Calu3 (cell line): ENCODE measurements at regions of chr10 and their contacts with region 1.

Region 1: GRCh38 chr10:88687853-88688467 is 18.1 kb upstream of the LIPK start:
- DNase-seq: no peak
- H3K4me3 Mint-ChIP-seq: no peak overlapping the region
- H3K27ac Mint-ChIP-seq: no peak overlapping the region
- H3K4me1 Mint-ChIP-seq: peaks cover 8% of the 10 kb centered on the region
- H3K27me3 Mint-ChIP-seq: no peaks in the 10 kb centered on the region
- CTCF ChIP-seq: no peak

Region 2: DNA sequence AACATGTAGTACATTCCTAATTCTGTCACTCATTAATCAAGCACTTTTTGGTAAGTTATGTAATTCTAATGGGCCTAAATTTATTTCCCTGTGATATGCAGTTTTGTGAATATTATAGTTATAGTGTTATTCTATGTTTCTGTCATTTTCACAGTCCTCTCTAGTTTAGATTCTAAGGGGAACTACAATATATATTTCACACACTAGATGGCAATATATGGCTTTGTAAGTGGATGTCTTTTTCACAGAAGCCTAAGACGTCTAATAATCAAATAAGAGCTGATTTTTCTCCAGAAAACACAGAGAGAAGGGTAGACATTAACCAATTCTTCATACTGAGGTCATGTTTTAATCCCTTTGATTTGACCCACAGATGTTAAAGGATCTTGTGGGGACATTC is 122.9 kb before region 1 on chr10:
- CTCF ChIA-PET with region 1: no interaction called
- intact Hi-C with region 1: loop called (anchors 5 kb)
- DNase-seq: no peak
- H3K4me3 Mint-ChIP-seq: no peak overlapping the region
- H3K27ac Mint-ChIP-seq: no peak overlapping the region
- H3K4me1 Mint-ChIP-seq: no peaks in the 10 kb centered on the region
- H3K27me3 Mint-ChIP-seq: no peaks in the 10 kb centered on the region
- CTCF ChIP-seq: no peak

Region 3: GRCh38 chr10:88744002-88744401 is 56.0 kb after region 1 on chr10:
- CTCF ChIA-PET with region 1: interaction called, 3 read pairs
- intact Hi-C with region 1: loop called (anchors 1 kb)
- DNase-seq: peak; percentile 35
- H3K4me3 Mint-ChIP-seq: no peak overlapping the region
- H3K27ac Mint-ChIP-seq: no peak overlapping the region
- H3K4me1 Mint-ChIP-seq: no peaks in the 10 kb centered on the region
- H3K27me3 Mint-ChIP-seq: peaks cover 19% of the 10 kb centered on the region
- CTCF ChIP-seq: no peak

Region 4: DNA sequence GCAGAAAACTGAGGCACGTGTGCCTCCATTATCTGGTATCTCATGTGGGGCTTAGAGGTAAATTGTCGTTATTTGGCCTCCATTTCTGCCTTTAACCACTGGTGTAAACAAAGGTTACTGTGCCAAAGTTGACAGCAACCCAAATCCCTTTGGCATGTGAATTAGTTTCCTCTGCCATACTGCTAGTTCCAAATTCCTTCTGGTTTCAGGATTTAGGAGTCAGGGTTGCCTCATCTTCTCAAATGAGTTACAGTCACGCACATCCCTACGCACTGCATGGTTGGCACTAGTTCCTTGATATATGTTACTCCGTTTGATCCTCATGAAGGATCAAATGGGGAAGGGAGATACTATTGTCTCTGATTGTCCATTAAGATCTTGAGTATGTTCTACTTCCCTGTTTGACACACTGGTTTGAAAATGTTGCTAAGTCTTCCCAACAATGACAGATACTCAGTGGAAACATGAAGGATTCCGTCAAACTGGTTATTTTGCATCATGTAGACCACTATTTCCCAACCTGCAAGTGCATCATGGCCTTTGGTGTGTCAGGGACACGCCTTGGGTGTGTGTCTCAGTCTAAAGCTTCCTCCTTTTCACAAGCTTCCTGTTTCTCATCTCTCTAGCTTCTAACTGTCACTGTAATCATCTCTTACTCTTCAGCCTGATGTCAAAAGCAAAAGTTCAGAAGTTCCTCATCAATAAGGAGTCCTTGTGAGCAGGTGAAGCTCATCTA is 71.6 kb after region 1 on chr10 and contains the start of gene LIPN:
- CTCF ChIA-PET with region 1: no interaction called
- intact Hi-C with region 1: no loop called
- DNase-seq: no peak
- H3K4me3 Mint-ChIP-seq: no peak within 1 kb of the TSS
- H3K27ac Mint-ChIP-seq: no peak within 1 kb of the TSS
- H3K4me1 Mint-ChIP-seq: no peaks in the 10 kb centered on the region
- H3K27me3 Mint-ChIP-seq: no peaks in the 10 kb centered on the region
- CTCF ChIP-seq: no peak
- total RNA-seq, gene LIPN: not detected in 2 replicates

Region 5: GRCh38 chr10:88791924-88792323 is 104.0 kb after region 1 on chr10:
- CTCF ChIA-PET with region 1: interaction called, 4 read pairs
- intact Hi-C with region 1: loop called (anchors 5 kb)
- DNase-seq: peak; percentile 21
- H3K4me3 Mint-ChIP-seq: no peak overlapping the region
- H3K27ac Mint-ChIP-seq: no peak overlapping the region
- H3K4me1 Mint-ChIP-seq: peaks cover 18% of the 10 kb centered on the region
- H3K27me3 Mint-ChIP-seq: peaks cover 9% of the 10 kb centered on the region
- CTCF ChIP-seq: no peak

Region 6: GRCh38 chr10:88810196-88810961 is 122.4 kb after region 1 on chr10:
- CTCF ChIA-PET with region 1: interaction called, 3 read pairs
- intact Hi-C with region 1: loop called (anchors 1 kb)
- DNase-seq: peak; percentile 34
- H3K4me3 Mint-ChIP-seq: no peak overlapping the region
- H3K27ac Mint-ChIP-seq: no peak overlapping the region
- H3K4me1 Mint-ChIP-seq: peaks cover 10% of the 10 kb centered on the region
- H3K27me3 Mint-ChIP-seq: no peaks in the 10 kb centered on the region
- CTCF ChIP-seq: peak; percentile 39

Region 7: DNA sequence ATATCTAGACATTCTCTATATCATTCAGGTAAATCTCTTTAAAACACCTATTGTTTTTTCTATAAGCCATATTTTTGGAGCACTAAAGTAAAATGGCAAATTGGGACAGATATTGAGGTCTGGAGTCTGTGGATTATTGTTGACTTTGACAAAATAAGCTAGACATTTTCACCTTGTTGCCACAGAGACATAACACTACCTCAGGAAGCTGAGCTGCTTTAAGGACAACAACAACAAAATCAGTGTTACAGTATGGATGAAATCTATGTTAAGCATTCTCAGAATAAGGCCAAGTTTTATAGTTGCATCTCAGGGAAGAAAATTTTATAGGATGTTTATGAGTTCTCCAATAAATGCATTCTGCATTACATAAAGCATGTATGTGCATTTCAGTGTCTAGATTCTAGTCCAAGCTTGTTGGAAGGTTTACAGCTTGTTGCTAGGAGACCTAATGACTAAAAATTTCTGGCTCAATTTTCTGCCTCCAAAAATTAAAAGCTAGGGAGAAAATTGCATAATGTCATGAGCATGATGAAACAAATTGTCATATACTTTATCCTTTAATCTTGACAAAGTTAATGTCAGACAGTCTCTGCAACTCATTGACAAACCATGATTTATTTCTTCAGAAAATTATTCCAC is 132.9 kb after region 1 on chr10:
- CTCF ChIA-PET with region 1: interaction called, 12 read pairs
- intact Hi-C with region 1: no loop called
- DNase-seq: no peak
- H3K4me3 Mint-ChIP-seq: no peak overlapping the region
- H3K27ac Mint-ChIP-seq: no peak overlapping the region
- H3K4me1 Mint-ChIP-seq: no peaks in the 10 kb centered on the region
- H3K27me3 Mint-ChIP-seq: no peaks in the 10 kb centered on the region
- CTCF ChIP-seq: no peak